OCI-LY7 (cell line): ENCODE measurements at regions of chr1 and their contacts with region 1.

Region 1: GRCh38 chr1:112715264-112716053 is at the start of gene PPM1J:
- DNase-seq: peak; percentile 94
- H3K4me3 ChIP-seq: peak within 1 kb of the TSS; percentile 78
- H3K27ac ChIP-seq: no peak within 1 kb of the TSS
- H3K4me1 ChIP-seq: peaks cover 20% of the 10 kb centered on the region
- CTCF ChIP-seq: no peak
- total RNA-seq, gene PPM1J: 1.4 and 1.5 TPM in 2 replicates

Region 2: GRCh38 chr1:112803906-112804762 is 88.7 kb after region 1 on chr1:
- CTCF ChIA-PET with region 1: interaction called, 3 read pairs
- POLR2A ChIA-PET with region 1: interaction called, 5 read pairs
- intact Hi-C with region 1: loop called (anchors 1 kb)
- DNase-seq: peak; percentile 63
- H3K4me3 ChIP-seq: no peak overlapping the region
- H3K27ac ChIP-seq: no peak overlapping the region
- H3K4me1 ChIP-seq: no peaks in the 10 kb centered on the region
- CTCF ChIP-seq: peak; percentile 82

Region 3: DNA sequence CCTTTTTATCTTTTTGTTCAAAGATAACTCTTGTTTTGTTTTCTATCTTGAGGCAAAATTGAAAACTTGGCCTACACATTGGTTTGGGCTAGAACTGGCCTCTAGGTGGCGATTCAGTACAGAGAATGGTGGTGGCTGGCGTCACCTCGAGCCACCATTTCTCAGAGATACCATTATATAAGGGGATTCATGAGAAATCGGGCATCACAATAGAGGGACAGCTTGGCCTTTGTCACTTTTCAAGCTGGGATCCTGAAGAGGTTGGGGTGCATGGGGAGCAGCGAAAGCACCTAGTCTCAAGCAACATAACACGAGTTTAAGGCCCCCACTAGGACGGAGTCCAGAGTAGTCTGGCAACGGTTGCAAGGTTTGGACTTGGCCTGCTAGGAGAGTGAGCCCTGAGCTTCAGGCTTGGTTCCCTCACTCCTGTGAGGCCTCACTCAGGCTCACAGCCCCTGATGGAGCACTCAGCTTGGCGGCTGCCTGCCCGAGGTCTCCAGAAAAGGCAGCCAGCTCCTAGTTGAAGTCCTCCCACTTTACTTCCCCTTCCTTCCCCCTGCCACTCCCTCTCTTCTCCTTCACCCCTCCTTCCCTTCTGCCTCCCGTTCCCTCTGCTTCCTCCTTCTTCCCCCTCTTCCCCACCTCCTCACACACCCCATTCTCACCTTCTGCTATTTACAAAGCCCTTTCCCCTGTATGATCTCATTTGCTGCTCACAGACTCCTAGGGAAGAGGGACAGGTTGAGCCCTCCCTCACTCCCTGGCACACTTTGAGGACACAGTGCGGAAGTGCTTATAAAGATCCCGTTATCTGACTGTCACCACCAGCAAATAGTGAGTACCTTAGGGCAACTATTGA is 425.4 kb after region 1 on chr1:
- CTCF ChIA-PET with region 1: no interaction called
- POLR2A ChIA-PET with region 1: no interaction called
- intact Hi-C with region 1: no loop called
- DNase-seq: peak; percentile 66
- H3K4me3 ChIP-seq: no peak overlapping the region
- H3K27ac ChIP-seq: no peak overlapping the region
- H3K4me1 ChIP-seq: no peaks in the 10 kb centered on the region
- CTCF ChIP-seq: peak; percentile 96